H1 (cell line): ENCODE measurements at regions of chr2 and their contacts with region 1.

Region 1: DNA sequence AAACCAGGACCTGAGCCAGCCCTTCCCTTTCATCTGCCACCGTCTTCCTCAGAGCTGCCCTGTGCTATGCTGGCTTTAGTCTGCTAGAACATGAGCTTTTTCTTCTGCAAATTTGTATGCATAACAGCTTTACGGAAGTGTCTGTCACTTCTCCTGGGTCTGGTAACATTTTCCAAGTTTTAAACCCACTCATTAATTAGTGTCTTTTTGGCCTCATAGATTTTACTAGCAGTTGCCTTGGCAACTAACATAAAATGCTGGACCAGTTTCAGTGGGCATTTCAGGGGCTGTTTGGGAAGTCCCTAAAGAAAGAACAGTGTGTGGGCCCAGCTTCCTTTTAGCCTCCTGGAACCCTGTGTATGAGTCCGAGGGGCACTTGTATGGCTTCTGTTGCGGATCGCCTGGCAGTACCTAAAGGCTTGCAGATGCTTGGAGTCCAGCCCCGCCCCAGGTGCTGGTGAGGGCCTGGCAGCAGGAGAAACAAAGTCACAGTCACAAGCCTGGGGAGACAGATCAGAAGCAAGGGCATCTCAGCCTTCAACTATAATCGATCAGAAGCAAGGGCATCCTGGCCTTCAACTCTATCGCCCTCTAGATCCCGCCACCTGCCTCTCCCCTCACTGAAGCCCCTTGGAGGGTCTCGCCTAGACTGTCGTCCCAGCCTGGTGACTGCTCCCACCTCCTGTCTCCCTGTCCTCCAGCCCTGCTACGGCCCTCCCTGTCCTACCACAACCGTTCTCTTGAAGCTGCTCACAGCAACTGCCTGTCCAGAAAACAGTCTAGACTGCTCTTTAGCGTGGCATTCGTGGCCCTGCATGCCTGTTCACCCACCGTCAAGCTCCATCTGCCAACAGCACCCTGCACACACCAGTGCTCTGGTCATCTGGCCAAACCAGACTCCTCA is 36.8 kb upstream of the MAPRE3 start:
- DNase-seq: no peak
- H3K4me3 ChIP-seq: no peak overlapping the region
- H3K27ac ChIP-seq: no peak overlapping the region
- H3K4me1 ChIP-seq: peaks cover 0 to 4% (median 1%) of the 10 kb centered on the region in 4 experiments; a peak in 4 of 7 replicates
- H3K27me3 ChIP-seq: no peaks in the 10 kb centered on the region; a peak in 2 of 7 replicates
- CTCF ChIP-seq: peak in 1 of 3 experiments; percentile 15; a peak in 1 of 4 replicates
- EP300 ChIP-seq: no peak
- POLR2A ChIP-seq: no peak
- RAD21 ChIP-seq: no peak; a peak in 1 of 4 replicates

Region 2: GRCh38 chr2:26785431-26786206 is 148.1 kb before region 1 on chr2 and contains the start of gene CENPA:
- CTCF ChIA-PET with region 1: no interaction called
- POLR2A ChIA-PET with region 1: no interaction called
- DNase-seq: peak; percentile 93 to 96
- H3K4me3 ChIP-seq: peak within 1 kb of the TSS; percentile 71 to 87 (median 74)
- H3K27ac ChIP-seq: no peak within 1 kb of the TSS
- H3K4me1 ChIP-seq: peaks cover 0 to 1% (median 0%) of the 10 kb centered on the region in 4 experiments; a peak in 2 of 7 replicates
- H3K27me3 ChIP-seq: peaks cover 0 to 5% (median 4%) of the 10 kb centered on the region in 4 experiments; a peak in 2 of 7 replicates
- CTCF ChIP-seq: 0 out of 4 replicates have a peak, but pooled peaks of 1 of the 3 experiments have one; percentile 6
- EP300 ChIP-seq: no peak
- POLR2A ChIP-seq: peak; percentile 57 to 81
- RAD21 ChIP-seq: no peak
- total RNA-seq, gene CENPA: 28.5 and 30.9 TPM in 2 replicates

Region 3: GRCh38 chr2:26840937-26841613 is 92.6 kb before region 1 on chr2:
- CTCF ChIA-PET with region 1: interaction called, 235 read pairs
- POLR2A ChIA-PET with region 1: no interaction called
- DNase-seq: no peak
- H3K4me3 ChIP-seq: no peak overlapping the region
- H3K27ac ChIP-seq: no peak overlapping the region
- H3K4me1 ChIP-seq: peaks cover 0 to 2% (median 0%) of the 10 kb centered on the region in 4 experiments; a peak in 2 of 7 replicates
- H3K27me3 ChIP-seq: peaks cover 0 to 12% (median 5%) of the 10 kb centered on the region in 4 experiments; a peak in 4 of 7 replicates
- CTCF ChIP-seq: peak in 2 of 3 experiments; percentile 5 to 11; a peak in 1 of 4 replicates
- EP300 ChIP-seq: no peak
- POLR2A ChIP-seq: no peak
- RAD21 ChIP-seq: 0 out of 4 replicates have a peak, but pooled peaks of 1 of the 2 experiments have one; percentile 16

Region 4: DNA sequence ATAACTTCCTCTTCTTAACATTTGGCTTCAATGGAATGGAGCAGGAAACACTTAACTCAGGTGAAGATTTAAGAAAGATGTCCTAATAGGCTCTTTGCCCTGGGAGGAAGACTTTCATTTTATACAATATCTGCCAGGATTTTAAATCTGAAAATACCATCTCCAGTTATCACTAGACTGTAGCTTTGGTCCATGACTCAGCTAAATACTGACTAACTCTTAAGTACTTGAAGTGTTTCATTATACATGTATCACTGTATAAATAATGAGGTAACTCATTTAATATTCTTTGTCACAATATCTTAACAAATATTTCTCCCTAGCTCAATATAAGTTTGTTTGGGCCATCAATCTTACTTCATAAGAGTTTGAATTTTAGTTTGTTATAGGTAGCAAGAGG is 921.8 kb after region 1 on chr2:
- CTCF ChIA-PET with region 1: no interaction called
- POLR2A ChIA-PET with region 1: no interaction called
- DNase-seq: no peak
- H3K4me3 ChIP-seq: no peak overlapping the region
- H3K27ac ChIP-seq: no peak overlapping the region
- H3K4me1 ChIP-seq: no peaks in the 10 kb centered on the region
- H3K27me3 ChIP-seq: no peaks in the 10 kb centered on the region
- CTCF ChIP-seq: no peak
- EP300 ChIP-seq: no peak
- POLR2A ChIP-seq: no peak
- RAD21 ChIP-seq: no peak